Activated CD4-positive, alpha-beta memory T cell treated with anti-CD3 and anti-CD28 coated beads, Interleukin-2, amount 10 ng/mL, durations not matched to agents 7 days and 5 days (primary cell): ENCODE measurements at regions of chr5 and their contacts with region 1.

Region 1: GRCh38 chr5:59126708-59127573 is 544.1 kb downstream of the RAB3C start:
- DNase-seq: no peak
- H3K4me3 Mint-ChIP-seq: no peak overlapping the region
- H3K27ac Mint-ChIP-seq: no peak overlapping the region
- H3K4me1 Mint-ChIP-seq: peaks cover 19% of the 10 kb centered on the region
- H3K27me3 Mint-ChIP-seq: no peaks in the 10 kb centered on the region

Region 2: GRCh38 chr5:59039296-59040023 is 87.5 kb before region 1 on chr5:
- CTCF ChIA-PET with region 1: interaction called, 47 read pairs
- POLR2A ChIA-PET with region 1: interaction called, 124 read pairs
- DNase-seq: peak; percentile 95
- H3K4me3 Mint-ChIP-seq: peak overlapping the region; percentile 84
- H3K27ac Mint-ChIP-seq: peak overlapping the region; percentile 97
- H3K4me1 Mint-ChIP-seq: peaks cover 46% of the 10 kb centered on the region
- H3K27me3 Mint-ChIP-seq: no peaks in the 10 kb centered on the region

Region 3: GRCh38 chr5:59099270-59099994 is 27.5 kb before region 1 on chr5:
- CTCF ChIA-PET with region 1: interaction called, 14 read pairs
- POLR2A ChIA-PET with region 1: interaction called, 56 read pairs
- DNase-seq: peak; percentile 74
- H3K4me3 Mint-ChIP-seq: peak overlapping the region; percentile 51
- H3K27ac Mint-ChIP-seq: peak overlapping the region; percentile 88
- H3K4me1 Mint-ChIP-seq: peaks cover 76% of the 10 kb centered on the region
- H3K27me3 Mint-ChIP-seq: peaks cover 2% of the 10 kb centered on the region

Region 4: DNA sequence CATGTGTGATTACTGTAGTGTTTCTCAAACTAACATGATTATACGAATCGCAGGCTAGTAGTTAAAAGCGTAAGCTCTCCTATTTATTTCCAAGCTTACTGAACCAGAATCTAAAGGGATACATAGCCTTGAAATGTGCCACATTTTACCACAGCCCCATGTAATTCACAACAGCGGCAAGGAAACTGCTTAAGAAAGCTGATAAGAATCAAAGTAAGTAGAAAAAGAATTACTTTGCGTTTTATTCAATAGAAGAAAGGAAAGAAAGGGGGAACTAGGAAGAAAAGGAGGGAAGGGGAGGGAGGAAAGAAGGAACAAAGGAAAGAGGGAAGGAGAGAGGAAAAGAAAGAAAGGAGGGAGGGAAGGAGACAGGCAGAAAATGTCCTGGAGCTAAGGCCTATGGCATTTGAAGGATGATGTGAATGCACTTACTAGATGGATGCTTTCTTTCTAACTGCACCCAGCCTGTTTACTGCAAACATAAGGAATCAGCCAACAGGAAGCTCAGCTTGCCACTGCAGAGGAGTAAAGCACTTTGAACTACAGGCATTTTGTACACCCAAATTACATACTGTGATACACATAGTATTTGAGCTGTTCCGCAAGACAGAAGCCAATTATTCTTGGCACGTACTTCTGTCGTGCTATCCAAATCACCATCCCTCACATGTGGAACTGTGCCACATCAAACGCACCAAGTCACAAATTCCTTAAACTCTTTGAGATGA is 22.4 kb before region 1 on chr5:
- CTCF ChIA-PET with region 1: interaction called, 14 read pairs
- POLR2A ChIA-PET with region 1: interaction called, 56 read pairs
- DNase-seq: no peak
- H3K4me3 Mint-ChIP-seq: no peak overlapping the region
- H3K27ac Mint-ChIP-seq: no peak overlapping the region
- H3K4me1 Mint-ChIP-seq: peaks cover 57% of the 10 kb centered on the region
- H3K27me3 Mint-ChIP-seq: no peaks in the 10 kb centered on the region

Region 5: DNA sequence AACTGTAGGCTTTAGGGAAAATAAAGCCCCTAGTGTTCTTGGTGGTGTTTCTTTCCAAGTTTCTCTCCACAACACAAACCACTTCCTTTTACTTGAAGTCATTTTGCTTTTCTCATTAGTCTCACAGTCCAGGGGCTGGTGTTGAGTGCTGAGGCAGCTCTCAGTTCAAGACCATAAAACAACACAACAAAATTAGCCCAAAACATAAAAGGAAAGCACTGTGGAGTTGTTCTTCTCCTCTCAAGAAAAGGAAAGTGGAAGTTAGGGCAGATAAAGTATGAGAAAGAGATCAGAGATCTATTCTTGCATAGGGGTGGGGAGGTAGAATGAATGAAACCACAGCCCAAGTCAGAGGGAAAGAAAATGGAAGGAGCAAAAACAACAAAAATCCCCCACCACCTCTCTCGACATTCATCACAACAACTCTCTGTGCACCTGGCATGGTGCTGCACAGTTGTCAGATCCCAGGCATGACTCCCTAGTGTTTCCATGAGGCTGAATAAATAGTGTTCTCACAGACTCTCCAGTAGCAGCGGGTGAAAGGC is 25.8 kb after region 1 on chr5:
- CTCF ChIA-PET with region 1: no interaction called
- POLR2A ChIA-PET with region 1: interaction called, 16 read pairs
- DNase-seq: no peak
- H3K4me3 Mint-ChIP-seq: peak overlapping the region; percentile 11
- H3K27ac Mint-ChIP-seq: peak overlapping the region; percentile 68
- H3K4me1 Mint-ChIP-seq: peaks cover 3% of the 10 kb centered on the region
- H3K27me3 Mint-ChIP-seq: peaks cover 1% of the 10 kb centered on the region